ENCODE measurements at regions of chr17 and their contacts with region 1.

Region 1: DNA sequence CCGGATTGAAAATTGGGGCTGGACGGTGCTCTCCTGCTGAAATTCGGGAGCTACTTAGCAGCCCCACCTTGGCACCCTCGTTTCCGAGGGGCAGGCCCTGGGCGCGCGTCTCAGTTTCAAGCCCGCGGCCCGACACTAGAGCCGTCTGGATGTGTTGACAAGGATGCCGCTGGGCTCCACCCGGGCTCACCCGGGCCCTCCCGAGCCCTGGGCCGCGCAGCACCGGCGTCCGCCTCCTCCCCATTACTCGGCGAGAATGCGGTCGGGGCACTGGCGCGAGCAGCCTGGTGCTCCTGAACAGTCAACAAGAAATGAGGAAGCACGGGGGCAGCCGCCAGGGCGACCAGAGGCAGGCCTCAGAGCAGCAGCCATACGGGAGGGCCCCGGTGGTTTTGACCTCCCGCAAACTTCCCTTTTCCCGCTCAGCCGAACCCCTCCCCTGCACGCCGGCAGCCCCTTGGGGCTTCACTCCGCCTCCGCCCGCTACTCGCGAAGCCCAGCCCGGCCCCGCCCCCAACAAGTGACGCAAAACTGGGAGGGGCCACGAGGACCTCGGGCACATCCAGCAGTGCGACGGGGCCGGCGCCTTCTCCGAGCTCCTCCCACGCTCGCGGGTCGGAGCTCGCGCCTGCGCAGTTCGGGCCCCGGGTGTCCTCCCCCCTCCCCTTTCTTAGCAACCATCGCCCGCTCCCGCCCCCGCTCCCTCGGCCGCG is 447 bp upstream of the SEC14L1 start:
- DNase-seq: peak; percentile 100
- H3K4me3 Mint-ChIP-seq: peak overlapping the region; percentile 73
- H3K27ac Mint-ChIP-seq: peak overlapping the region; percentile 94
- H3K4me1 Mint-ChIP-seq: peaks cover 48% of the 10 kb centered on the region
- H3K27me3 Mint-ChIP-seq: no peaks in the 10 kb centered on the region

Region 2: DNA sequence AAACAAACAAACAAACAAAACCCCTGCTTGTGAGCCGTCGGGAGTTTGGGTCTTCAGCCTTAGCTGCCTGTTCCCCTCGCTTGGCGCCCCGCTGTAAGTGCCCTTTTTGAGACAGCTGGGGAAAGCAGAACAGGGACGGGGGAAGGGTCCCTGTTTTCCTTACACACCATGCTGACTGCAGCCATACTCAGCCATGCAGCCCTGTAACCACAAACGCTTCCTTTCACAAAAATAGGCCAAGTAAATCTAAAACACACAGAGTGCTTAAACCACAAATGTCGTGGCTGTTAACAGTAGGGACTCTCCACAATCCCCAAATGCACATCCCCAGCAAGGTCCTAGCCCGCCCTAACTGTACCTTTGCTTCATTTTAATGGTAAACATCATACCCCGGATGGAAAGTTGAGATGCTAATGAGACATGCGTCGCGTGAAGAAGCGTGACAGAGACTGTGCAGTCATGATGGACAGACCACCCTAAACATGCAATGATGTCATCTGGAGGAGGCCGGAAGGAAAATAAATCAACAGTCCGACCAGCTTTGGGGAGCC is 142.3 kb before region 1 on chr17:
- CTCF ChIA-PET with region 1: no interaction called
- intact Hi-C with region 1: loop called (anchors 2 kb)
- DNase-seq: peak; percentile 85
- H3K4me3 Mint-ChIP-seq: peak overlapping the region; percentile 45
- H3K27ac Mint-ChIP-seq: peak overlapping the region; percentile 78
- H3K4me1 Mint-ChIP-seq: peaks cover 55% of the 10 kb centered on the region
- H3K27me3 Mint-ChIP-seq: no peaks in the 10 kb centered on the region

Region 3: DNA sequence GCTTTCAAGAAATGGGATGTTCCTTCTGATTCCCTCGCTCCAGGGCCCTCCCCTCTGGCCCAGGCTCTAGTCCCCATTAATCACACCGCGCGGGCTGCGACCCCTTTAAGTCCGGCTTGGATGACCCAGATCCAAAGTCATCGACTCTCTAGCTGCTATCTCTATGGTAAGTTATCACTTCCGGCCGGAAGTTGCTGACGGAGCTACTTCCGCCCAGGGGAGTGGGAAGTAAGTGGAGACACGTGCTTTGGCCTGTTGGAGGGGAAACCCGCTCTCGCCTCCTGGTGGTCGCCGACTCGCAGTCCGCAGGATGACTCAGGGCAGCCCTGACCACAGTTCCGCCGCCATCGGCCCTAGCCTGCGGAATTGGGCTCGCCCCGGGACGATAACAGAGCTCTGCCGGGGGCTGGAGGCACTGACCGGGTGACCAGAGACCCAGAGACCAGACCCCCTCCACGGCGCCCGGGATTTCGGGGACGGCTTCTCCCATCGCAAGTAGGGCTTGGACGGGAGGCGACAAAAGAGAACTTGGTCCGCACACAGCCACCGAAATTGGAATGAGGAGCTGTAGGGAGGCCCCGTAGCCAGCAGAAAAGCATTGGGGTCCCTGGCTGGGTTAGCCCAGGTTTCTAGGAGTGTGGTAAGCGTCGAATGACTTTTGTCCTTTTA is 51.7 kb before region 1 on chr17:
- CTCF ChIA-PET with region 1: interaction called, 3 read pairs
- intact Hi-C with region 1: loop called (anchors 1 kb)
- DNase-seq: peak; percentile 90
- H3K4me3 Mint-ChIP-seq: peak overlapping the region; percentile 89
- H3K27ac Mint-ChIP-seq: peak overlapping the region; percentile 98
- H3K4me1 Mint-ChIP-seq: peaks cover 53% of the 10 kb centered on the region
- H3K27me3 Mint-ChIP-seq: no peaks in the 10 kb centered on the region

Region 4: DNA sequence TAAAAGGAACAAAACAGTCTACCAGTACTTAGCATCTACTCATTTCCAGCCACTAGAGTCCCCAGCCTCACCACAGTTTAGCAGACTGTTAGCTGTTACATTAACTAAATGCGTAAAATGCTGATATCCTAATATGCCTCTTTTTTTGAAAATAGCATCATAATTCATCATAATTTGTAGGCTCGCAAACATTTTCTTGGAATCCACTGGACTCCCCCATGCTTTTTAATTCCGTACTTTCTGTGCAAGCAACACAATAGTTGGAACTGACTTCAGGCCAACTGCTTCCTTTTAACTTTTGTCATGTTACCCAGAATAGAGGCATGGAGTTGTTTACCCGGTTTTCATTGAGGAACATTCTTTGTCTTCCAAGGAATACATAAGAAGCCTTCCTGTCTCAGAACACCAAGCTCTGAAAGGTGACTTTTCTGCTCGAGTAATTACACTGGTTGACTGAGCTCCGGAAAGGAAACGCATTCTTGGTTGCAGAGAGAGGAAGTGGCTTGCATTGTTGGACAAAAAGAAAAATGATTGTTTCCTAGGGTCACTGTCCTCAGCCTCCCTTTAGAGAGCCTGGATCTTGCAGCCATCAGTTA is 30.5 kb before region 1 on chr17:
- CTCF ChIA-PET with region 1: no interaction called
- intact Hi-C with region 1: no loop called
- DNase-seq: no peak
- H3K4me3 Mint-ChIP-seq: no peak overlapping the region
- H3K27ac Mint-ChIP-seq: no peak overlapping the region
- H3K4me1 Mint-ChIP-seq: peaks cover 14% of the 10 kb centered on the region
- H3K27me3 Mint-ChIP-seq: no peaks in the 10 kb centered on the region

Region 5: DNA sequence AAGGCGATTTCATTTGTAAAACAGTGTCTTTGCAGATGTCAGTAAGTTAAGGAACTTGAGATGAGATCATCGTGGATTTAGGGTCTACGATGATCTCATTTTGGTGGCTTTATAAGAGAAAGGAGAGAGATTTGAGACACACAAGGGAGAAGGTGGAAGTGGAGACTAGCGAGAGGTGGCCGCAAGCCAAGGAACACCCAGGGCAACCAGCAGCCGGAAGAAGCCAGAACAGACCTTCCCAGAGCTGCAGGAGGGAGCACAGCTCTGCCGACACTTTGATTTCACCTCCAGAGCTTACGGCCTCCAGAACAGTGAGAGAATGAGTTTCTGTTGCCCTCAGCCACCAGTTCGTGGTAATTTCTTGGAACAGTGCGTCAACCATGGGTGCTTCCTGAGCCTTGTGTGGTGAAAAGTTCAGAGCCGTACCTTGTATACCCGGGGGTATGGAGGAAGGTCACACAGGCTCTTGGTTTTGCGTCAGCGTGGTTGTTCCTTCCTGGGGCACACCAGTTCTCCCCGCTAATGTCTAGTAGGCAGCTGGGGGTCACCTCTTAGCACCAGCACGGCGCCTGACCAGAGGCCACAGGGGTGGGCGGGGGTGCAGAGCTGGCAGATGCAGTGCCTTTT is 12.5 kb before region 1 on chr17:
- CTCF ChIA-PET with region 1: interaction called, 5 read pairs
- intact Hi-C with region 1: loop called (anchors 1 kb)
- DNase-seq: peak; percentile 83
- H3K4me3 Mint-ChIP-seq: peak overlapping the region; percentile 67
- H3K27ac Mint-ChIP-seq: peak overlapping the region; percentile 90
- H3K4me1 Mint-ChIP-seq: peaks cover 26% of the 10 kb centered on the region
- H3K27me3 Mint-ChIP-seq: no peaks in the 10 kb centered on the region

Region 6: GRCh38 chr17:77186141-77186604 is 45.9 kb after region 1 on chr17:
- CTCF ChIA-PET with region 1: no interaction called
- intact Hi-C with region 1: loop called (anchors 1 kb)
- DNase-seq: peak; percentile 46
- H3K4me3 Mint-ChIP-seq: no peak overlapping the region
- H3K27ac Mint-ChIP-seq: no peak overlapping the region
- H3K4me1 Mint-ChIP-seq: peaks cover 44% of the 10 kb centered on the region
- H3K27me3 Mint-ChIP-seq: no peaks in the 10 kb centered on the region

Region 7: DNA sequence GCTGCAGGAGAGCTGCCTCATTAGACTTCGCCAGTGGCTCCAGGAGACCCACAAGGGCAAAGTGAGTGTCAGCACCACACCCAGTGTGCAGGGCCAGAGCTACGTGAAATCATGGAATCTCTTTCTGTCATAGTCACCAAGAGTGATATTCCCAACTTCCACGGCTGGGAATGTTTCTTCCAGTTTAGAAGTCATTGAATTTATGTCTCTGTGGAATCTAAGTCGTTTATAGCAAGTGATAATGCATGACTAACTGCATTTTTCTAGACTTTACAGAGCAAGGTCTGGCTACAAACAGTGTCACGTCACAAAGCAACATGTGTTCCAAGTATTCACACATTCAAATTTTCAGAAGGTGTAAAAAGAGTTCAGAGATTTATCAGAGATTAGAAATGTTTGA is 55.9 kb after region 1 on chr17:
- CTCF ChIA-PET with region 1: no interaction called
- intact Hi-C with region 1: no loop called
- DNase-seq: no peak
- H3K4me3 Mint-ChIP-seq: no peak overlapping the region
- H3K27ac Mint-ChIP-seq: no peak overlapping the region
- H3K4me1 Mint-ChIP-seq: peaks cover 2% of the 10 kb centered on the region
- H3K27me3 Mint-ChIP-seq: no peaks in the 10 kb centered on the region

Region 8: DNA sequence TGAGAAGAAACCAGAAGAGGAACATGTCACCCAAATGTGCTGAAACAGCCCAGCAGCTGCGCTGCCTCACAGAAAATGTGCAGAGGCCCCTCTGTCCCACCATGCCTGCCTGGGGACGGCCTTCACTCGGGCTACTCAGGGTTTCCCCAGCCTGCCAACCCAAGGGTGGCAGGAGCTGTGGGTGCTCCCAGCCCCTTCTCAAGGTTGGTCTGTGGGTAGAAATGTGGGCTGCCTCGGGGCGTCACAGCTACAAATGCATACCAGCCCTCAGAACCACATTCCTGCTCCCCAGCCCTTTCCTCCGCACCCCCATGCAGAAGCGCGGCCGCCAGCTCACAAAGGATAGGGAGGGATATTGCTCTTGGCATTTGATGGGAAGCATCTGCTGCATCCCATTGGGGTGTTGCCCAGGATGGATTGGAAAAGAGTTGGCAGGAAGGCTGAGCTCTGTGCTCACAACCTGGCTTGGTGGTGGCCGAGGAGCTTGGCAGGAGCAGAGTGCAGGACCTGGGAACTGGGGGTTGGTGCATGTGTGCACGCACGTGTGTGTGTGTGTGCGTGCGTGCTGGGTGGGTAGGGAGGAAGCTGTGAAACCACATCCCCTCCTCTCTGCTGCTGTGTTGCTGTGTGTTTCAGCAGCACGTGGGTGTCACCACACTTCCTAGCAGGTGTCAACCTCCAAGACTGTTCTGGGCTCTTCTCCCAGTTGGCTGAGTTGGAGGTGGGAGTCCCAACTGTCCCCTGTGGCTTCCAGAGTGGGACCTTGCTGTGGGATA is 304.9 kb after region 1 on chr17:
- CTCF ChIA-PET with region 1: no interaction called
- intact Hi-C with region 1: loop called (anchors 10 kb)
- DNase-seq: peak; percentile 87
- H3K4me3 Mint-ChIP-seq: peak overlapping the region; percentile 58
- H3K27ac Mint-ChIP-seq: peak overlapping the region; percentile 94
- H3K4me1 Mint-ChIP-seq: peaks cover 89% of the 10 kb centered on the region
- H3K27me3 Mint-ChIP-seq: no peaks in the 10 kb centered on the region

Measured in activated naive CD4-positive, alpha-beta T cell treated with anti-CD3 and anti-CD28 coated beads for 36 hours (primary cell).